MCF 10A (cell line): ENCODE measurements at regions of chr21 and their contacts with region 1.

Region 1: GRCh38 chr21:34545079-34545884 is 33.3 kb upstream of the KCNE1 start:
- DNase-seq: no peak
- H3K4me3 Mint-ChIP-seq: no peak overlapping the region
- H3K27ac Mint-ChIP-seq: peak overlapping the region; percentile 44
- H3K4me1 Mint-ChIP-seq: peaks cover 12% of the 10 kb centered on the region
- H3K27me3 Mint-ChIP-seq: no peaks in the 10 kb centered on the region
- CTCF ChIP-seq: no peak

Region 2: GRCh38 chr21:34514576-34515135 is 30.6 kb before region 1 on chr21:
- CTCF ChIA-PET with region 1: no interaction called
- POLR2A ChIA-PET with region 1: no interaction called
- intact Hi-C with region 1: no loop called
- DNase-seq: no peak
- H3K4me3 Mint-ChIP-seq: no peak overlapping the region
- H3K27ac Mint-ChIP-seq: no peak overlapping the region
- H3K4me1 Mint-ChIP-seq: peaks cover 18% of the 10 kb centered on the region
- H3K27me3 Mint-ChIP-seq: no peaks in the 10 kb centered on the region
- CTCF ChIP-seq: no peak

Region 3: DNA sequence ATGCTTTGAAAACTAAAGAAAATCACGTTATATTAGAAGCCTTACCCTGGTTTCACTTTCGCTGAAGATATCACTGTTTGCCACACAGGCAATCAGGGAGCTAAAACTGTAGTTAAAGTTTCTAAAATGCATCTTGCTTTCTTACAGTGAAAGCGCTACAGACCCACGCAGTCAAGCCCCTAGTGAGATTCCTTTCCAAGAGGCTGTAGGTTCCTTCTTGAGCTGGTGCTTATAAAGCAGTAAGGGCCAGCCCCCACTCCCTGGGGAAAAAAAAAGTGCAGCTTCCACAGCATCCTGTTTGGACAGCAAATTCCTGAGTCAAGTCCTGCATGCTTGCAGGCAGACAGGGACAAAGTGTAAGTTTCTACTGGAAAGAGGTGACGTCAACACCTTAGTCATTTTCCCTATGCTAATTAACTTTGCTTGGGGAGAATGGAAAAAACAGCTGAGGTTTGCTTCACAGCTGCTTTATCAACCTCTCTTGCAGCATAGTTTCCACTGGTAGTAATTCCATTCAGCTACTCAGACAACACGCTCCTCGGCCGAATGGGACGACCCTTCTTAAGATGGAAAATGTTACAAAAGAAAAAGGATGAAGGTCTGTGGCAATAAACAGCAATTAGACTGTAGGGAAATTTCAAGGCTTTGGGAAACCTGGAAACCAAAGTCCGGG is 18.5 kb before region 1 on chr21:
- CTCF ChIA-PET with region 1: interaction called, 4 read pairs
- POLR2A ChIA-PET with region 1: interaction called, 5 read pairs
- intact Hi-C with region 1: loop called (anchors 1 kb)
- DNase-seq: peak; percentile 96
- H3K4me3 Mint-ChIP-seq: peak overlapping the region; percentile 76
- H3K27ac Mint-ChIP-seq: peak overlapping the region; percentile 95
- H3K4me1 Mint-ChIP-seq: peaks cover 22% of the 10 kb centered on the region
- H3K27me3 Mint-ChIP-seq: no peaks in the 10 kb centered on the region
- CTCF ChIP-seq: no peak